ENCODE measurements at regions of chr14 and their contacts with region 1.

Region 1: GRCh38 chr14:75088574-75089373 is 19.3 kb downstream of the ZC2HC1C start:
- DNase-seq: peak; percentile 6 to 30 (median 26)
- H3K4me3 ChIP-seq: no peak overlapping the region
- H3K4me3 Mint-ChIP-seq: no peak overlapping the region
- H3K27ac ChIP-seq: no peak overlapping the region
- H3K27ac Mint-ChIP-seq: peak overlapping the region in 1 of 7 donors; percentile 15
- H3K4me1 ChIP-seq: no peaks in the 10 kb centered on the region
- H3K4me1 Mint-ChIP-seq: no peaks in the 10 kb centered on the region
- H3K27me3 ChIP-seq: no peaks in the 10 kb centered on the region
- H3K27me3 Mint-ChIP-seq: no peaks in the 10 kb centered on the region
- CTCF ChIP-seq: peak; percentile 82

Region 2: GRCh38 chr14:74860906-74861733 is 227.7 kb before region 1 on chr14:
- intact Hi-C with region 1: loop called (anchors 5 to 10 kb)
- DNase-seq: peak; percentile 69 to 79 (median 78)
- H3K4me3 ChIP-seq: no peak overlapping the region
- H3K4me3 Mint-ChIP-seq: no peak overlapping the region
- H3K27ac ChIP-seq: no peak overlapping the region
- H3K27ac Mint-ChIP-seq: no peak overlapping the region
- H3K4me1 ChIP-seq: peaks cover 13 to 14% of the 10 kb centered on the region in 2 donors
- H3K4me1 Mint-ChIP-seq: peaks cover 21% of the 10 kb centered on the region
- H3K27me3 ChIP-seq: no peaks in the 10 kb centered on the region
- H3K27me3 Mint-ChIP-seq: peaks cover 0 to 2% (median 0%) of the 10 kb centered on the region in 3 donors
- CTCF ChIP-seq: peak; percentile 85

Region 3: DNA sequence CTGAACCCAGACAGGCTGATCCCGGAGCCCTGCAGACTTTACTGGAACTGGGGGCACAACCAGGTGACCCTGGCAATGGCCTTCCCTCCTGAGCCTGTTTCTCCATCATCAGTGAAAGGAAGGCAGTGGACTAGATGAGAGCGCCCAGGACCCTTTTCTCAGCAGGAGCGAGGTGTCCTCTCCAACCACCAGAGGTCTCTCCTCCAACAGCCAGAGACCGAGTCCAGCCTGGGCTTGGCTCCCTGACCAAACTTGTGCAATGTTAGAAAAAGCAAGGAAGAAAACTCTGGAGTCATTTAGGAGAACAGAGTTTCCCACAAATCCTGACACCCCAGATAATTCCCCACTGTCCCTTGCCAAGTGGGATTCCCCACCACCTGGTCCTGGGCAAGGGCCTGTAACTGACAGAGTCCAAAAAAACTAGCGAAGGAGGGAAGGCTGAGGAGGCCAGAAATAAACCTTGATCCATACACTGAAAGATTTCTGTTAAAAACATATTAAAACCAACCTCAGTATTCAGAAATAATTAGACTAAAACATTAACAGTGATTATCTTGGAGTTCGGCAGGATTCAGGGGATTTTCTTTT is 174.7 kb before region 1 on chr14:
- intact Hi-C with region 1: loop called (anchors 2 to 5 kb)
- DNase-seq: peak in 2 of 3 donors; percentile 28 to 34
- H3K4me3 ChIP-seq: no peak overlapping the region
- H3K4me3 Mint-ChIP-seq: no peak overlapping the region
- H3K27ac ChIP-seq: no peak overlapping the region
- H3K27ac Mint-ChIP-seq: peak overlapping the region in 2 of 7 donors; percentile 13 to 28
- H3K4me1 ChIP-seq: no peaks in the 10 kb centered on the region
- H3K4me1 Mint-ChIP-seq: peaks cover 1% of the 10 kb centered on the region
- H3K27me3 ChIP-seq: no peaks in the 10 kb centered on the region
- H3K27me3 Mint-ChIP-seq: peaks cover 0 to 3% (median 2%) of the 10 kb centered on the region in 3 donors
- CTCF ChIP-seq: peak; percentile 60

Region 4: GRCh38 chr14:74945823-74946682 is 142.7 kb before region 1 on chr14:
- intact Hi-C with region 1: loop called in 1 of 2 experiments (anchors 5 kb)
- DNase-seq: peak; percentile 41 to 68 (median 59)
- H3K4me3 ChIP-seq: no peak overlapping the region
- H3K4me3 Mint-ChIP-seq: peak overlapping the region in 1 of 2 donors; percentile 83
- H3K27ac ChIP-seq: no peak overlapping the region
- H3K27ac Mint-ChIP-seq: peak overlapping the region in 3 of 7 donors; percentile 47 to 82 (median 73)
- H3K4me1 ChIP-seq: peaks cover 27 to 29% of the 10 kb centered on the region in 2 donors
- H3K4me1 Mint-ChIP-seq: peaks cover 32% of the 10 kb centered on the region
- H3K27me3 ChIP-seq: no peaks in the 10 kb centered on the region
- H3K27me3 Mint-ChIP-seq: peaks cover 3 to 11% (median 8%) of the 10 kb centered on the region in 3 donors
- CTCF ChIP-seq: peak; percentile 97

Region 5: GRCh38 chr14:75069045-75069810 is 19.5 kb before region 1 on chr14 and contains the start of gene ZC2HC1C:
- intact Hi-C with region 1: no loop called
- DNase-seq: peak; percentile 57 to 72 (median 72)
- H3K4me3 ChIP-seq: peak within 1 kb of the TSS; percentile 34 to 71 (median 47)
- H3K4me3 Mint-ChIP-seq: no peak within 1 kb of the TSS
- H3K27ac ChIP-seq: peak within 1 kb of the TSS; percentile 62 to 69
- H3K27ac Mint-ChIP-seq: peak within 1 kb of the TSS in 6 of 7 donors; percentile 23 to 85 (median 60)
- H3K4me1 ChIP-seq: peaks cover 15 to 30% of the 10 kb centered on the region in 2 donors
- H3K4me1 Mint-ChIP-seq: peaks cover 4% of the 10 kb centered on the region
- H3K27me3 ChIP-seq: no peaks in the 10 kb centered on the region
- H3K27me3 Mint-ChIP-seq: peaks cover 0 to 3% (median 2%) of the 10 kb centered on the region in 3 donors
- CTCF ChIP-seq: no peak
- polyA plus RNA-seq, gene ZC2HC1C: 0.08 TPM in 1 of 3 donors, not detected in the others

Measured in CD14-positive monocyte (primary cell).